Vagina (tissue), 2 donors: ENCODE measurements at regions of chr17 and their contacts with region 1.

Region 1: GRCh38 chr17:81994593-81995462 is 17.4 kb downstream of the ASPSCR1 start:
- DNase-seq: no peak
- H3K4me3 ChIP-seq: no peak overlapping the region
- H3K27ac ChIP-seq: no peak overlapping the region
- H3K4me1 ChIP-seq: peaks cover 30% of the 10 kb centered on the region
- H3K27me3 ChIP-seq: no peaks in the 10 kb centered on the region
- CTCF ChIP-seq: no peak
- POLR2A ChIP-seq: no peak

Region 2: DNA sequence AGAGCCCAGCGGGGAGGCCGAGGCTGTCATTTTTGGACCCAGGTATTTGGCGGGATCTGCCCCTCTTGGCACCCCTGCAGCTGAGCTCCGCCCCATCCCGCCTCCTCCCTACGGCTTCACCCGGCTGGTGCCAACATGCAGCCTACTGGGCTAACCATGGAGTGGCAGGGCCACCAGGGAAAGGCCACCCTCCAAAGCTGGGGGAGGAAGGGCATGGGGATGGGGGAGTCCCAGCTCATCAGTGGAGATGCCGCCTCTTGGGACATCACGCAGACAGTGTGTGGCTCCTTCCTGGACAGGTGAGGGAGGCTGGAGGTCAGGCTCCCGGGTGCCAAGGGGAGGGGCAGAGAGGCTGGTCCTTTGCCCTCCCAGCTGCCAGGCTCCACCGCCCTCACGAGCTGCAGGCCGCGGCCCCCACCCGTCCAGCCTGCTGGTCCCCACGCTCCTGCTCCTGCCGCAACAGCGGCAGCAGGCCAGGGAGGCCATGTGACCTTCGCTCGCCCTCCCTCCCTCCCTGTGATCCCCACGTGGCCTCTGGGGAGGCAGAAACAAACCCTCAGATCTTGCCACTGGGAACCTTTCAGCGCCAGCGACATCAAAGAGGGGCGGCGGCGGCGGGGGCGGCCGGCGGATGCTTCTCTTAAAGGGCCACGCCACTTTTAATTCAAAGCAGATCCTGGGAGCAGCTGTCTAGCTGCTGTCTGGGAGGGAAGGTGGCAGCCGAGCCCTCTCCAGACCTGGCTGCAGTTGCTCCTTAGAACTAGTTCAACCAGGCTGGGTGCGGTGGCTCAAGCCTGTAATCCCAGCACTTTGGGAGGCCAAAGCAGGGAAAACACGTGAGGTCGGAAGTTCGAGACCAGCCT is 27.1 kb before region 1 on chr17:
- intact Hi-C with region 1: loop called (anchors 1 kb)
- DNase-seq: no peak
- H3K4me3 ChIP-seq: peak overlapping the region; percentile 1 to 31
- H3K27ac ChIP-seq: peak overlapping the region; percentile 66
- H3K4me1 ChIP-seq: peaks cover 26% of the 10 kb centered on the region
- H3K27me3 ChIP-seq: no peaks in the 10 kb centered on the region
- CTCF ChIP-seq: no peak
- POLR2A ChIP-seq: no peak

Region 3: GRCh38 chr17:82205719-82206508 is 211.1 kb after region 1 on chr17:
- intact Hi-C with region 1: no loop called
- DNase-seq: no peak
- H3K4me3 ChIP-seq: no peak overlapping the region
- H3K27ac ChIP-seq: peak overlapping the region; percentile 74
- H3K4me1 ChIP-seq: peaks cover 21% of the 10 kb centered on the region
- H3K27me3 ChIP-seq: no peaks in the 10 kb centered on the region
- CTCF ChIP-seq: peak; percentile 64 to 93 (median 85)
- POLR2A ChIP-seq: no peak

Region 4: GRCh38 chr17:82257473-82257872 is 262.6 kb after region 1 on chr17:
- intact Hi-C with region 1: no loop called
- DNase-seq: no peak
- H3K4me3 ChIP-seq: no peak overlapping the region
- H3K27ac ChIP-seq: no peak overlapping the region
- H3K4me1 ChIP-seq: no peaks in the 10 kb centered on the region
- H3K27me3 ChIP-seq: no peaks in the 10 kb centered on the region
- CTCF ChIP-seq: no peak
- POLR2A ChIP-seq: no peak